ENCODE measurements at regions of chr5 and their contacts with region 1.

Region 1: DNA sequence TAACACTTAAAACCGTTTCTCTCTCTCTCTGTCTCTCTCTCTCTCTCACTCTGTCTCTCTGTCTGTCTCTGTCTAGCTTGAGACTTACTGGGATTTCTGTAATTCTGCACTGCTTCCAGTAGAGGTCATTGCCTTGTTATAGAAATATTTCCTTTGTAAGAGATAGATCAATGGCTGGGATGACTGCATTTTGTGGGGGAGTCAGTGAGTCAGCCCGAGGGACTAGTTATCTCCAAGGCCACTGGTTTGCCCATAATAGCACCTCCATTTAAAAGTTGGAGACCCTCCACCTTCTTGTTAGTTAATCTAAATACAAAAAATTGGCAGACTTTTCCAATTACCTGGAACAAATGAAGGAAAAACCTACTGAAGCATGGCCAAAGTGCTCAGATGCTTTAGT is 547.2 kb downstream of the LRRC70 start:
- DNase-seq: peak in 1 of 2 experiments; percentile 17
- H3K4me3 ChIP-seq: no peak overlapping the region
- H3K27ac ChIP-seq: no peak overlapping the region
- H3K4me1 ChIP-seq: no peaks in the 10 kb centered on the region; a peak in 1 of 7 replicates
- H3K27me3 ChIP-seq: no peaks in the 10 kb centered on the region
- CTCF ChIP-seq: peak in 1 of 3 experiments; percentile 47; a peak in 2 of 4 replicates
- EP300 ChIP-seq: no peak
- POLR2A ChIP-seq: no peak
- RAD21 ChIP-seq: peak; percentile 57 to 66

Region 2: DNA sequence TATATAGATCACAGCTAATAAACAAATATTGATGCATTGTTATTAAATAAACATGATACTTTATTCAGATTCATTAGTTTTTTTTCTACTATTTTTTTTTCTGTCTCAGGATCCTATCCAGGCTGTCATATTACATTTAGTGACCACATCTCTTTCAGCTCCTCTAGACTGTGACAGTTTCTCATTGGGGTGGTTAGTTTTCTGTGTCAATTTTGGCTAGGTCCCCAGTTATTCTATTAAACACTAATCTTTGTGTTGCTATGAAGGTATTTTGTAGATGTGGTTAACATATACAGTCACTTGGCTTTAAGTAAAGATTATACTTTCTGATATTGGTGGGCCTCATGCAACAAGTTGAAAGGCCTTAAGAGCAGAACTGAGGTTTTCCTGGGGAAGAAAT is 15.7 kb after region 1 on chr5:
- CTCF ChIA-PET with region 1: interaction called, 10 read pairs
- POLR2A ChIA-PET with region 1: no interaction called
- DNase-seq: no peak
- H3K4me3 ChIP-seq: no peak overlapping the region
- H3K27ac ChIP-seq: no peak overlapping the region
- H3K4me1 ChIP-seq: no peaks in the 10 kb centered on the region
- H3K27me3 ChIP-seq: no peaks in the 10 kb centered on the region
- CTCF ChIP-seq: no peak
- EP300 ChIP-seq: no peak
- POLR2A ChIP-seq: no peak
- RAD21 ChIP-seq: no peak

Region 3: DNA sequence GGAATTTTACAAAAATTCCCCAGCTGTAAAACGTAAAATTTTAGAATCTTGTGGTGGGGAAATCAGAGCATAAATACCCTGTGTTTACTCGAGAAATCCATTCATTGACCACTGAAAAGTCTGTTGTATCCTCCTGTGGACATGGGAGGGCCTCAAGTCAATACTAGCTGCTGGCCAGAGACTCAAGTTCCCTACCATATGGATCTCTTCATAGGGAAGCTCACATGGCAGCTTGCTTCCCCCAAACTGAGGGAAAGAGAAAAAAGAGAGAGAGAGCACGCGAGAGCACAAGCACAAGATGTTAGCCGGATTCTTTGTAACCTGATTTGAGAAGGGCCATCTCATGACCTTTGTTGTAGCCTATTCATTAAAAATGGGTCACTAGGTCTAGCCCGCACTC is 44.6 kb after region 1 on chr5:
- CTCF ChIA-PET with region 1: no interaction called
- POLR2A ChIA-PET with region 1: no interaction called
- DNase-seq: no peak
- H3K4me3 ChIP-seq: no peak overlapping the region
- H3K27ac ChIP-seq: no peak overlapping the region
- H3K4me1 ChIP-seq: 0 out of 7 replicates have a peak, but pooled peaks cover 0 to 2% (median 0%) of the 10 kb centered on the region in 4 experiments
- H3K27me3 ChIP-seq: no peaks in the 10 kb centered on the region
- CTCF ChIP-seq: no peak
- EP300 ChIP-seq: no peak
- POLR2A ChIP-seq: no peak
- RAD21 ChIP-seq: no peak

Region 4: DNA sequence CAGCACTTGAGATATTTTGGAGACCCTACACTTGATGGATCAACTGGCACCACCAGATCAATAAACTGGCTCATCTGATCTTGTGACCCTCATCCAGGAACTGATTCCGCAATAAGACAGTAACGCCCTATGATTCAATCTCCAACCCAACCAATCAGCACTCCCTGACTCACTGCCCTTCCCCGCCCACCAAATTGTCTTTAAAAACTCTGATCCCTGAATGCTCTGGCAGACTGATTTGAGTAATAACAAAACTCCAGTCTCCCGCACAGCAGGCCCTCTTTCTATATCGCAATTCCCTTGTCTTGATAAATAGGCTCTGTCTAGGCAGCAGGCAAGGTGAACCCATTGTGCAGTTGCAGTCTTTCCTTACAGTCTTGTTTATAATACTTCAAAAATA is 129.7 kb after region 1 on chr5:
- CTCF ChIA-PET with region 1: no interaction called
- POLR2A ChIA-PET with region 1: no interaction called
- DNase-seq: peak in 1 of 2 experiments; percentile 39
- H3K4me3 ChIP-seq: no peak overlapping the region
- H3K27ac ChIP-seq: 0 out of 2 replicates have a peak overlapping the region, but pooled peaks have one; percentile 9
- H3K4me1 ChIP-seq: peaks cover 0 to 4% (median under 1%) of the 10 kb centered on the region in 4 experiments; a peak in 2 of 7 replicates
- H3K27me3 ChIP-seq: no peaks in the 10 kb centered on the region
- CTCF ChIP-seq: no peak
- EP300 ChIP-seq: no peak
- POLR2A ChIP-seq: no peak
- RAD21 ChIP-seq: no peak

Measured in H1 (cell line).